Activated naive CD4-positive, alpha-beta T cell treated with anti-CD3 and anti-CD28 coated beads for 36 hours (primary cell): ENCODE measurements at regions of chr7 and their contacts with region 1.

Region 1: DNA sequence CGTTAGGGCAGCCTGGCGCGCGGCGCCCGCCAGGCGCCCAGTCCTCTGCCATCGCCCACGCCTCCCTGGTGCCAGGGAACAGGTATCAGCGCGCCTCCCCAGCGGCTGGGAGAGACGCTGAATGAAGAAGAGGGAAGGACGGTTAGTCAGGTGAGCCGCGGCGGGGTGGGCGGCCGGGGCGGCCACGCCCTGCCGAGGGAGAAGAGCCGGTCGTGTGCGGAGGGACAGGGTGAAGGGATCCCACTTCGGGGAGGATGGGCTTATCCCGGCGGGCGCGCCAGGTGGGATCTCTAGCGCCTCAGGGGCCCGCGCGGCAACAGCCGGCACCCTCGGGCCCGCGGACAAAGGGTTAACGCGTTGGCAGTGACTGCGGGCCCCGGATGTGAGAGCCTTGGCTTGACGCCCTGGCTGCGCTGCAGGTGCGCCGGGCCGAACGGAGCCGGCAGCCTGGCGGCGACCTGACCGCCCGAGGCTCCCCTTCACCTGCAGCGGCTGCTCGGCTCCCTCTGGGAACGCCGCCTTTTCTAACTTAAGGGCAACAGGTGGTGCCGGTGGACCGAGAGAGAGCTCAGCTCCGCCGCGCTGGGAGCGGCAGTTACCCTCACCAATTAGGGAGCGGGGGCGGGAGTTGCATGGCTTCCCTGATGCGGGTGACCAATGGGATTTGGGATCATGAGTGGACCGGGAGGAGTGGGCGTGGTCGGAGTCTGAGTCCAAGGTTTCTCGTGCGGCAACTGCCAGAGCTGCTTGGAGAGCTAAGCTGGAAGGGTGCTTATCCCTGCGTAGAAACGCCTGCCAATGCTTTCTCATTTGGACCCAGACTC is at the start of gene ARL4A:
- DNase-seq: peak; percentile 97
- H3K4me3 Mint-ChIP-seq: peak within 1 kb of the TSS; percentile 96
- H3K27ac Mint-ChIP-seq: peak within 1 kb of the TSS; percentile 92
- H3K4me1 Mint-ChIP-seq: peaks cover 26% of the 10 kb centered on the region
- H3K27me3 Mint-ChIP-seq: no peaks in the 10 kb centered on the region
- total RNA-seq, gene ARL4A: 8.1 to 10.0 TPM

Region 2: GRCh38 chr7:10973061-10973944 is 1713.8 kb before region 1 on chr7 and contains the start of gene PHF14:
- CTCF ChIA-PET with region 1: no interaction called
- intact Hi-C with region 1: loop called (anchors 1 kb)
- DNase-seq: peak; percentile 97
- H3K4me3 Mint-ChIP-seq: peak within 1 kb of the TSS; percentile 90
- H3K27ac Mint-ChIP-seq: peak within 1 kb of the TSS; percentile 89
- H3K4me1 Mint-ChIP-seq: peaks cover 31% of the 10 kb centered on the region
- H3K27me3 Mint-ChIP-seq: peaks cover 8% of the 10 kb centered on the region
- total RNA-seq, gene PHF14: 26.0 to 28.1 TPM

Region 3: DNA sequence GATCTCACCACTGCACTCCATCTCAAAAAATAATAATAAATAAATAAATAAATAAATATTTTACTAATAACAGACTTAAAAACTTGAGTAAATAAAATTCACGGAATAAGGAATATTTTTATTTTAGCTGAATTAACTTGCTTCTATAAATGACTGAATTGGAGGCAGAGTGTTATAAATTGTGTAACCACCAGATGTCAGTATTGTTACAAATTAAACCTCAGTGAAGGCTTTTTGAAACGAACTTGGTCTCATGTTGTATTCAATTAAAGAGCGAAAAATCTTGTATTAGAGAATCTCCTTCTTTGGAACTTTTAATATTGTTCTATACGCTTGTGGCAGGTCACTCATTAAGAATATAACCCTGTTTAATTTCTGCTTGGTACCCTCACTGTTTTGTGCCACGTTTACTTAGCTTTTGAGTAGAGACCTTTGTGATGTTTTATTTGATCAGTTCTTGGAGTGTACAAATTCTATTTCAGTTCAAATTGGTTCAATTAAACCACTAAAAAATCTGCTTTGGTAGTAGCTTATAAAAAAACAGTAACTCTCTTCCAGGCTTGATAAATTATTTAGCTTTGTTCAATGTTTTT is 162.2 kb before region 1 on chr7:
- CTCF ChIA-PET with region 1: interaction called, 9 read pairs
- intact Hi-C with region 1: loop called (anchors 2 kb)
- DNase-seq: no peak
- H3K4me3 Mint-ChIP-seq: no peak overlapping the region
- H3K27ac Mint-ChIP-seq: no peak overlapping the region
- H3K4me1 Mint-ChIP-seq: no peaks in the 10 kb centered on the region
- H3K27me3 Mint-ChIP-seq: peaks cover 21% of the 10 kb centered on the region

Region 4: DNA sequence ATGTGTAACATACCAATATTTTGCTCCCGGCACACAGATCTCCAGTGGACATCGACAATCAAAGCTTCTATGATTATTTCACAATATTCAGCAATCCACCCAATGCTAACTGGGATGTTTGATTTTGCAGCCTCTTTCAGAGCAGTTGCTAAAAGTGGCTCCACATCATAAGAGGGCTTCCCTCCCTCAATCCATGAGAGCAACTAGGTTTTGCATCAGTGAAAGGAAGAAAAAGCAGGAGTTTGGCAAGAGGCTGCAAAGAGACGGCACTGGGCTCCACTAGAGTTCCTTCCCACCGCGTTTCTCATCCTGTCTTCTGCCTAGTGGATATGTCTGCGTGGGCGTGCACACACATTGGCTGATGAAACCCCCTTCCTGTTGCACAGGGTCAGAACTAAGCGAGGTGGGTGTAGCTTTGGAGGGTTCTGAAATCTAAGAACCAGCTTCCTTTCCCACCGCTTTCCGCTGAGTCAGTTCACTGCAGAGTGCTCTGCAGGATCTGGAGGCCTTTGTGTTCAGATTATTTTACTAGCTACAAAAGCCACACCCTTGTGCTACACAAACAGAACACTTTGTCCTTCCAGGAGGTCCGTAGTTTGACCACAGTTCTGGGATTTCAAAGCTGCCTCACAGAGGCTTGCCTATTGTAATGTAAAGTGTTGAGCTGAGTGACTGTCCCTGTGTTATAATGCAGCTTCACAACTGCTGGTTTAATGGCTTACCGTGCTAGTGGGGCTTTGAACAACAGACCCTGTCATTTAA is 28.4 kb after region 1 on chr7:
- CTCF ChIA-PET with region 1: interaction called, 3 read pairs
- intact Hi-C with region 1: loop called (anchors 1 kb)
- DNase-seq: peak; percentile 44
- H3K4me3 Mint-ChIP-seq: no peak overlapping the region
- H3K27ac Mint-ChIP-seq: no peak overlapping the region
- H3K4me1 Mint-ChIP-seq: peaks cover 23% of the 10 kb centered on the region
- H3K27me3 Mint-ChIP-seq: no peaks in the 10 kb centered on the region

Region 5: GRCh38 chr7:13057462-13058200 is 370.5 kb after region 1 on chr7:
- CTCF ChIA-PET with region 1: no interaction called
- intact Hi-C with region 1: loop called (anchors 1 kb)
- DNase-seq: no peak
- H3K4me3 Mint-ChIP-seq: peak overlapping the region; percentile 3
- H3K27ac Mint-ChIP-seq: peak overlapping the region; percentile 27
- H3K4me1 Mint-ChIP-seq: peaks cover 12% of the 10 kb centered on the region
- H3K27me3 Mint-ChIP-seq: no peaks in the 10 kb centered on the region

Region 6: GRCh38 chr7:13179102-13179501 is 492.0 kb after region 1 on chr7:
- CTCF ChIA-PET with region 1: interaction called, 3 read pairs
- intact Hi-C with region 1: loop called (anchors 2 kb)
- DNase-seq: no peak
- H3K4me3 Mint-ChIP-seq: no peak overlapping the region
- H3K27ac Mint-ChIP-seq: no peak overlapping the region
- H3K4me1 Mint-ChIP-seq: no peaks in the 10 kb centered on the region
- H3K27me3 Mint-ChIP-seq: peaks cover 19% of the 10 kb centered on the region